Activated CD4-positive, alpha-beta T cell treated with anti-CD3 and anti-CD28 coated beads for 36 hours (primary cell): ENCODE measurements at regions of chr16 and their contacts with region 1.

Region 1: GRCh38 chr16:5615868-5616642 is 518.5 kb upstream of the EEF2KMT start:
- DNase-seq: peak; percentile 68
- ATAC-seq: peak; percentile 60
- H3K4me3 Mint-ChIP-seq: no peak overlapping the region
- H3K27ac Mint-ChIP-seq: no peak overlapping the region
- H3K4me1 Mint-ChIP-seq: no peaks in the 10 kb centered on the region
- H3K27me3 Mint-ChIP-seq: peaks cover 21% of the 10 kb centered on the region

Region 2: GRCh38 chr16:5502467-5502869 is 113.6 kb before region 1 on chr16:
- CTCF ChIA-PET with region 1: interaction called, 4 read pairs
- POLR2A ChIA-PET with region 1: no interaction called
- intact Hi-C with region 1: loop called (anchors 1 to 5 kb)
- DNase-seq: peak; percentile 21
- ATAC-seq: no peak
- H3K4me3 Mint-ChIP-seq: no peak overlapping the region
- H3K27ac Mint-ChIP-seq: no peak overlapping the region
- H3K4me1 Mint-ChIP-seq: no peaks in the 10 kb centered on the region
- H3K27me3 Mint-ChIP-seq: peaks cover 5% of the 10 kb centered on the region

Region 3: DNA sequence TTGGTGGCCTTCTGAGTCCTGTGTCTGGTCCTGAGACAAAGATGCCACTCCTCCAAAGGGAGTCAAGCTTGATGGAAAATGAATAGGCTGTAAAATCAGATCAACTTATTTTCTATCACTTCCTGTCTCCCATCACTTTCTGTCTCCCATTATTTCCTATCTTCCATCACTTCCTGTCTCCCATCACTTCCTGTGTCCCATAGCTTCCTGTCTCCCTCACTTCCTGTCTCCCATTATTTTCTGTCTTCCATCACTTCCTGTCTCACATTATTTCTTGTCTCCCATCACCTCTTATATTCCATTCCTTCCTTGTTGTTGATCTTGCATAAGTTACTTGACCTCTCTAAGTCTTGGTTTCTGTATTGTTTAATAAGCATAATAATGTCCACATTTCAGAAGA is 99.9 kb before region 1 on chr16:
- CTCF ChIA-PET with region 1: no interaction called
- POLR2A ChIA-PET with region 1: no interaction called
- intact Hi-C with region 1: no loop called
- DNase-seq: no peak
- ATAC-seq: no peak
- H3K4me3 Mint-ChIP-seq: no peak overlapping the region
- H3K27ac Mint-ChIP-seq: no peak overlapping the region
- H3K4me1 Mint-ChIP-seq: no peaks in the 10 kb centered on the region
- H3K27me3 Mint-ChIP-seq: peaks cover 4% of the 10 kb centered on the region

Region 4: GRCh38 chr16:5633845-5634440 is 17.9 kb after region 1 on chr16:
- CTCF ChIA-PET with region 1: interaction called, 29 read pairs
- POLR2A ChIA-PET with region 1: no interaction called
- intact Hi-C with region 1: no loop called
- DNase-seq: no peak
- ATAC-seq: no peak
- H3K4me3 Mint-ChIP-seq: no peak overlapping the region
- H3K27ac Mint-ChIP-seq: no peak overlapping the region
- H3K4me1 Mint-ChIP-seq: no peaks in the 10 kb centered on the region
- H3K27me3 Mint-ChIP-seq: no peaks in the 10 kb centered on the region

Region 5: DNA sequence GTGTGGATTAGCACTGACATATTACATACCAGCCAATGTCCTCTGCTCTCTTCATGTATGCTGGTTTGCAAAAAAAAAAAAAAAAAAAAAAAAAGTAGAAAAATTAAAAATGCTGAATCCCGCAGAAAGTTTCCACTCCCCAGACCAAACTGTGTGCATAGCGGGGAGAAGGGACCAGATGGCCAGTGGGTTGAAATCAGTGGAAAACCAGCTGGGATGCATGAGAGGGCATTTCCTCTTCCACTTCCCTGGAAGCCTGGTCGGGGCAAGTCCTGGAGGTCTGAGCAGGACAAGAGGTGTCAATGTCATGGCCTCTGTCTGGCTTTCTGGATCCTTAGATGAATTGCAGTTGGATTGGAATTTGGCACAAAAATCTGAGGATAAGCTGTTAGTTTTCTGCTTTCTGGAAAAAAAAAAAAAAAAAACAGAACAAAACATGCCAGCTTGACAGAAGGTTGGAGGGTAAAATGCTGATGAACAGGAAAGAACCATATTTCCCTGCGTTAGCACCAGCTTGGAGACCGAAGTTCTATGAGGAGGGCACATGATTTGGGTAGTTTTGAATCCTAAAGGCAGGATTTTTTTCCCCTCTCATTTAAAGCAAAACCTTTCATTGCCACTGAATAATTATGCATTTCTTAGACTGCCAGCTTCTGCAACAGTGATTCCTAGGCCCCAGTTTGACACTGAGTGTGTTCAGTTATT is 423.0 kb after region 1 on chr16:
- CTCF ChIA-PET with region 1: no interaction called
- POLR2A ChIA-PET with region 1: no interaction called
- intact Hi-C with region 1: no loop called
- DNase-seq: no peak
- ATAC-seq: no peak
- H3K4me3 Mint-ChIP-seq: no peak overlapping the region
- H3K27ac Mint-ChIP-seq: no peak overlapping the region
- H3K4me1 Mint-ChIP-seq: no peaks in the 10 kb centered on the region
- H3K27me3 Mint-ChIP-seq: no peaks in the 10 kb centered on the region